ENCODE measurements at regions of chr2 and their contacts with region 1.

Region 1: DNA sequence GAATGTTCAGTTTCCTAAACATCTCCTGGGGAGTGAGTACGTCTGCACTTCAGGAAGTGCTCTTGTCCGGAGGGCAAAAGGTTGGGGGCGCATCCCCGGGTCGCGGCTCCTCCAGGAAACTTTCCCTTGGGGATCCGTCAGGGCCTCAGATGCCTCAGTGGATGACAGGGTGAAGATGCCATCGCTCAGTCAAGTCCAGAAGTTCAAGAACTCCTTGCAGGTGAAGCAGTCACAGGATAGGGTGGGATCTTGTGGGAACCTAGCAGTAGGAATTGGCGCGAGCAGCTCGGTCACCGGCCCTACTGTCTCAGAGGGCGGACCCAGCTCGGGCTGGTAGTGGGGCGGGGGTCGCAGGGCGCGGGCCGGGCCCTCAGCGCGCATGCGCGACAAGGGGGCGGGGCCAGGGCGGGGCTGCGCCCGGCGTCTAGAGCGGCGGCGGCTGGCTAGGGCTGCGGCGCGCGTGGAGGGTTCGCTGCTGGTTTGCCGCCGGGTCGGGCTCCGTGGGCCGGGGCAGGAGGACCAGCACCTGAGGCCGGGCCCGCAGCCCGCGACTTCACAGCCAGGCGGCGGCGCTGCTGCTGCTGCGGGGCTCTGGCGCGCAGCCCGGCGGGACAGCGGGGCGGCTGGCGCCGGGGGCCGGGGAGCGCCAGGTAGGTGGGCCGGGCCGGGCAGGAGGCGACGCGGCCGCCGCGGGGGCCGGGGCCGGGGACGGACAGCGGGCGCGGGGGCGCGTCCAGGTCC is at the start of gene INPP4A:
- DNase-seq: peak; percentile 75 to 79 (median 79)
- H3K4me3 ChIP-seq: peak within 1 kb of the TSS; percentile 84 to 88
- H3K4me3 Mint-ChIP-seq: peak within 1 kb of the TSS; percentile 92 to 99 (median 98)
- H3K27ac ChIP-seq: peak within 1 kb of the TSS; percentile 78
- H3K27ac Mint-ChIP-seq: peak within 1 kb of the TSS; percentile 92 to 99 (median 96)
- H3K4me1 ChIP-seq: peaks cover 44% of the 10 kb centered on the region
- H3K4me1 Mint-ChIP-seq: peaks cover 18 to 49% (median 38%) of the 10 kb centered on the region in 4 donors
- H3K27me3 ChIP-seq: no peaks in the 10 kb centered on the region
- H3K27me3 Mint-ChIP-seq: no peaks in the 10 kb centered on the region
- total RNA-seq, gene INPP4A: 133 TPM

Region 2: DNA sequence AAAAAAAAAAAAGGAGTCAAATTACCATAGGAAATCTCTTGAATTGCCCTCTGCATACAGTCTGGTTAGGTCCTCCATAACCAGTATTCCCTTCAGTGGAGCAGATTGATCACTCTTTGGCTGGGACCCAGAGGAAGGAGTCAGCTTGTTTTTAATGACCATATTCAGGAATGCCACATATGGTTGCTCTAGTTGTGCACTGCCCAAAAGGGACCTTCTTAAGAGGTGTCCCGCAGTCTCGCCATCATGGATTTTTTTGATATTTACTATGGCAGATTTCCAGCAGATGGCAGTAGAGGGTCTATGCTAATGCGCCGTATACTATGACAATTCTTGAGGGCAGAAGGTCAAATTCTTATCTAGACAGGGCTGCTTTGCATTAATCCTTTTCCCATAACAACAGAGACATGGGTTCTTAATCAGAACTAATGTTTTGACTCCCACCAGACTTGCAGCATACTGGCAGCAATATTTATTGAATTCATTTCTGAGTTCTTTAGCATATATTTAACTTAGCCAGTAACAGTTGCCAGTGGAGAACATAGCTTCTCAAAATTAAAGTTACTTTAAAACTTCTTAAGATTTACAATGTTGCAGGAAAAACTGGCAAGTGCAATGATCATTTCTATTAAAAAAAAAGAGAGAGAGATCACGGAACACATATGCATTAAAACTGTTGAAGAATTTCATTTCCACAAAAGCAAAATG is 31.7 kb before region 1 on chr2:
- CTCF ChIA-PET with region 1: interaction called, 12 read pairs
- POLR2A ChIA-PET with region 1: no interaction called
- intact Hi-C with region 1: loop called (anchors 2 kb)
- DNase-seq: peak; percentile 57 to 78 (median 72)
- H3K4me3 ChIP-seq: no peak overlapping the region
- H3K4me3 Mint-ChIP-seq: no peak overlapping the region
- H3K27ac ChIP-seq: no peak overlapping the region
- H3K27ac Mint-ChIP-seq: peak overlapping the region in 1 of 7 donors; percentile 82
- H3K4me1 ChIP-seq: peaks cover 6% of the 10 kb centered on the region
- H3K4me1 Mint-ChIP-seq: peaks cover 0 to 6% (median 4%) of the 10 kb centered on the region in 4 donors
- H3K27me3 ChIP-seq: no peaks in the 10 kb centered on the region
- H3K27me3 Mint-ChIP-seq: no peaks in the 10 kb centered on the region

Region 3: GRCh38 chr2:98465456-98466226 is 21.0 kb after region 1 on chr2:
- CTCF ChIA-PET with region 1: interaction called, 45 read pairs
- POLR2A ChIA-PET with region 1: interaction called, 338 read pairs
- intact Hi-C with region 1: loop called (anchors 1 kb)
- DNase-seq: peak; percentile 84 to 93 (median 84)
- H3K4me3 ChIP-seq: peak overlapping the region; percentile 17 to 33
- H3K4me3 Mint-ChIP-seq: peak overlapping the region; percentile 80 to 98 (median 90)
- H3K27ac ChIP-seq: peak overlapping the region; percentile 71
- H3K27ac Mint-ChIP-seq: peak overlapping the region; percentile 92 to 98 (median 97)
- H3K4me1 ChIP-seq: peaks cover 96% of the 10 kb centered on the region
- H3K4me1 Mint-ChIP-seq: peaks cover 71 to 93% (median 82%) of the 10 kb centered on the region in 4 donors
- H3K27me3 ChIP-seq: no peaks in the 10 kb centered on the region
- H3K27me3 Mint-ChIP-seq: no peaks in the 10 kb centered on the region

Region 4: GRCh38 chr2:98479959-98480524 is 35.4 kb after region 1 on chr2:
- CTCF ChIA-PET with region 1: interaction called, 17 read pairs
- POLR2A ChIA-PET with region 1: interaction called, 327 read pairs
- intact Hi-C with region 1: loop called (anchors 1 kb)
- DNase-seq: peak in 3 of 5 donors; percentile 33 to 89 (median 42)
- H3K4me3 ChIP-seq: no peak overlapping the region
- H3K4me3 Mint-ChIP-seq: peak overlapping the region; percentile 41 to 75 (median 72)
- H3K27ac ChIP-seq: peak overlapping the region; percentile 61
- H3K27ac Mint-ChIP-seq: peak overlapping the region; percentile 91 to 95 (median 93)
- H3K4me1 ChIP-seq: peaks cover 100% of the 10 kb centered on the region
- H3K4me1 Mint-ChIP-seq: peaks cover 84 to 100% (median 93%) of the 10 kb centered on the region in 4 donors
- H3K27me3 ChIP-seq: no peaks in the 10 kb centered on the region
- H3K27me3 Mint-ChIP-seq: no peaks in the 10 kb centered on the region

Region 5: GRCh38 chr2:98518090-98518489 is 73.5 kb after region 1 on chr2:
- CTCF ChIA-PET with region 1: interaction called, 11 read pairs
- POLR2A ChIA-PET with region 1: interaction called, 3 read pairs
- intact Hi-C with region 1: loop called (anchors 1 kb)
- DNase-seq: peak; percentile 55 to 65 (median 61)
- H3K4me3 ChIP-seq: no peak overlapping the region
- H3K4me3 Mint-ChIP-seq: no peak overlapping the region
- H3K27ac ChIP-seq: no peak overlapping the region
- H3K27ac Mint-ChIP-seq: peak overlapping the region in 5 of 7 donors; percentile 19 to 70 (median 45)
- H3K4me1 ChIP-seq: peaks cover 54% of the 10 kb centered on the region
- H3K4me1 Mint-ChIP-seq: peaks cover 38 to 58% (median 50%) of the 10 kb centered on the region in 4 donors
- H3K27me3 ChIP-seq: no peaks in the 10 kb centered on the region
- H3K27me3 Mint-ChIP-seq: no peaks in the 10 kb centered on the region

Region 6: DNA sequence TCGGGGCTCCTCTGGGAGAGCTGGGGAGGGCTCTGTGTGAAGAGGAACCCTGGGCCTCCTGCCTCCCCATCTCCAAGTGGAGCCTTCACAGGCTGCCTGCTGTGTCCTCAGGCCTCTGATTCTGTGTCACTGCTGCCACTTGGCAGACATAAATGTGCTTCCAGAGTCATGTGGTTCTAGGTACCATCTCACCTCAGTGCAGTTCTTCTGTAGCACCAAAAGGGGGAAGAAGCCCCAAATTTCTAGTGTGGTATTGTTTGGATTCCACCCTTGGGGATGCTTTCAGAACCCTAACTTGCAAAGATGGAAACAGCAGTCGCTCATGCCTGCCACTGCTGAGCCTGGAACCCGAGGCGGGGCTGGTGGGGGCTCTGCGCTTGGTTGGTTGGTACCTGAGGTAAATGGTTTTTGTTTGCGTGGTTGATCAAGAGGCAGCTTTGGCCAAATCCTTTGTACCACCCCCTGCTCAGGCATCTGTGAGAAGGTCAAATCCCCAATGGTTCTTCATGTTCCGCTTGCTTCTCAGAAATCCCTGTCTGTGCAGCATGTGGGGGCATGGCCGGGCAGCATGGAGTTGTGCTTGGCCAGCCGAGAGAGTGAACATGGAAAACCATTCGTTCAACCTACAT is 136.2 kb after region 1 on chr2:
- CTCF ChIA-PET with region 1: no interaction called
- POLR2A ChIA-PET with region 1: no interaction called
- intact Hi-C with region 1: no loop called
- DNase-seq: no peak
- H3K4me3 ChIP-seq: no peak overlapping the region
- H3K4me3 Mint-ChIP-seq: no peak overlapping the region
- H3K27ac ChIP-seq: no peak overlapping the region
- H3K27ac Mint-ChIP-seq: peak overlapping the region in 4 of 7 donors; percentile 1 to 63 (median 10)
- H3K4me1 ChIP-seq: no peaks in the 10 kb centered on the region
- H3K4me1 Mint-ChIP-seq: peaks cover 0 to 3% (median under 1%) of the 10 kb centered on the region in 4 donors
- H3K27me3 ChIP-seq: no peaks in the 10 kb centered on the region
- H3K27me3 Mint-ChIP-seq: no peaks in the 10 kb centered on the region